MCF 10A (cell line): ENCODE measurements at regions of chrX and their contacts with region 1.

Region 1: GRCh38 chrX:109840585-109840984 is 107.5 kb upstream of the ACSL4 start:
- DNase-seq: peak; percentile 93
- H3K4me3 Mint-ChIP-seq: no peak overlapping the region
- H3K27ac Mint-ChIP-seq: no peak overlapping the region
- H3K4me1 Mint-ChIP-seq: no peaks in the 10 kb centered on the region
- H3K27me3 Mint-ChIP-seq: peaks cover 13% of the 10 kb centered on the region
- CTCF ChIP-seq: no peak

Region 2: DNA sequence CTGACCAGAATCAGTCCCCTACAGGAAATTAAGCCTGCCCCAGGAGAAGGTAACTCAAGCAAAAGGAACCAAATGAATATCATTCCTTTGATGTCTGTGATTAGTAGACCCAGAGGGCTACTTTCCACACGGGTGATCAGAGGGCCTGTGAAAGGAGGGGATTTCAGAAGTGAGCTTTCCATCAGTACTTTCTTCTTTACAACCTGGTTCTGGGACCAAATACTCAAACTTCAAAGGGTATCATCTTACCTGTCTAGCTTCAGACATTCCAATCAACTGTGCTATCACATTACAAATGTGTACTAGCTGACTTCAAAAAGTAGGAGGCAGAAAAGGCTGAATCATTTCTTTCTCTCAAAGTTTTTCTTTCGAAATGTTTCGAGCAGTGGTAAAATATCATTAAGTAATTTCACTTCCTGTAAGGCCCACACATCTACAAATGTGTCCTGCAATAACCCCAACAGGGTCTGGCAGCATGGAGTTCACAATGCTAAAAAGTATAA is 131.4 kb before region 1 on chrX:
- CTCF ChIA-PET with region 1: interaction called, 45 read pairs
- POLR2A ChIA-PET with region 1: interaction called, 3 read pairs
- intact Hi-C with region 1: loop called (anchors 5 kb)
- DNase-seq: peak; percentile 58
- H3K4me3 Mint-ChIP-seq: no peak overlapping the region
- H3K27ac Mint-ChIP-seq: peak overlapping the region; percentile 42
- H3K4me1 Mint-ChIP-seq: peaks cover 10% of the 10 kb centered on the region
- H3K27me3 Mint-ChIP-seq: peaks cover 14% of the 10 kb centered on the region
- CTCF ChIP-seq: no peak

Region 3: GRCh38 chrX:109714340-109714958 is 126.1 kb before region 1 on chrX:
- CTCF ChIA-PET with region 1: interaction called, 45 read pairs
- POLR2A ChIA-PET with region 1: interaction called, 3 read pairs
- intact Hi-C with region 1: loop called (anchors 5 kb)
- DNase-seq: peak; percentile 61
- H3K4me3 Mint-ChIP-seq: no peak overlapping the region
- H3K27ac Mint-ChIP-seq: no peak overlapping the region
- H3K4me1 Mint-ChIP-seq: peaks cover 10% of the 10 kb centered on the region
- H3K27me3 Mint-ChIP-seq: no peaks in the 10 kb centered on the region
- CTCF ChIP-seq: no peak

Region 4: DNA sequence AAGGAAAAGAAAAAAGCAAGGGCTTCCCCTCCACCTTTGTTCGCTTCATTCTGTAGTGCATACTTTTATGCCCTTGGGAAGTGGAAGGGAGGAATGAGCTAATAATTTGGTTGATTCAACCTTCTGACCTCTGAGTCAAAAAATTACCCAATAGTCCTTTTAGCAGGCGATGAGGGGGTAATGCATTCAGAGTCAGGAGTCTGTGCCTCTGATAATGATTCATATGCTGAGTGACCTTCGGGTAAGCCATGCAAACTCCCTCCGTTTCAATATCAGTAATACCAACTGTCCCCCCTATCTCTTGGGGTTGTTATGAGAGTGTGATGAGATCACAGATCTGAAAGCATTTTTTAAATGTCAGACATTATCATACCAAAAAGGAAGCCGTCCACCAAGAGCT is 65.9 kb before region 1 on chrX:
- CTCF ChIA-PET with region 1: no interaction called
- POLR2A ChIA-PET with region 1: interaction called, 3 read pairs
- intact Hi-C with region 1: loop called (anchors 10 kb)
- DNase-seq: peak; percentile 81
- H3K4me3 Mint-ChIP-seq: no peak overlapping the region
- H3K27ac Mint-ChIP-seq: no peak overlapping the region
- H3K4me1 Mint-ChIP-seq: peaks cover 8% of the 10 kb centered on the region
- H3K27me3 Mint-ChIP-seq: peaks cover 38% of the 10 kb centered on the region
- CTCF ChIP-seq: no peak

Region 5: GRCh38 chrX:109797311-109797975 is 43.1 kb before region 1 on chrX:
- CTCF ChIA-PET with region 1: interaction called, 4 read pairs
- POLR2A ChIA-PET with region 1: interaction called, 11 read pairs
- intact Hi-C with region 1: no loop called
- DNase-seq: peak; percentile 17
- H3K4me3 Mint-ChIP-seq: no peak overlapping the region
- H3K27ac Mint-ChIP-seq: peak overlapping the region; percentile 8
- H3K4me1 Mint-ChIP-seq: peaks cover 15% of the 10 kb centered on the region
- H3K27me3 Mint-ChIP-seq: peaks cover 34% of the 10 kb centered on the region
- CTCF ChIP-seq: no peak

Region 6: GRCh38 chrX:109826954-109827708 is 13.5 kb before region 1 on chrX:
- CTCF ChIA-PET with region 1: interaction called, 7 read pairs
- POLR2A ChIA-PET with region 1: interaction called, 10 read pairs
- intact Hi-C with region 1: no loop called
- DNase-seq: peak; percentile 52
- H3K4me3 Mint-ChIP-seq: no peak overlapping the region
- H3K27ac Mint-ChIP-seq: no peak overlapping the region
- H3K4me1 Mint-ChIP-seq: peaks cover 12% of the 10 kb centered on the region
- H3K27me3 Mint-ChIP-seq: peaks cover 60% of the 10 kb centered on the region
- CTCF ChIP-seq: no peak

Region 7: DNA sequence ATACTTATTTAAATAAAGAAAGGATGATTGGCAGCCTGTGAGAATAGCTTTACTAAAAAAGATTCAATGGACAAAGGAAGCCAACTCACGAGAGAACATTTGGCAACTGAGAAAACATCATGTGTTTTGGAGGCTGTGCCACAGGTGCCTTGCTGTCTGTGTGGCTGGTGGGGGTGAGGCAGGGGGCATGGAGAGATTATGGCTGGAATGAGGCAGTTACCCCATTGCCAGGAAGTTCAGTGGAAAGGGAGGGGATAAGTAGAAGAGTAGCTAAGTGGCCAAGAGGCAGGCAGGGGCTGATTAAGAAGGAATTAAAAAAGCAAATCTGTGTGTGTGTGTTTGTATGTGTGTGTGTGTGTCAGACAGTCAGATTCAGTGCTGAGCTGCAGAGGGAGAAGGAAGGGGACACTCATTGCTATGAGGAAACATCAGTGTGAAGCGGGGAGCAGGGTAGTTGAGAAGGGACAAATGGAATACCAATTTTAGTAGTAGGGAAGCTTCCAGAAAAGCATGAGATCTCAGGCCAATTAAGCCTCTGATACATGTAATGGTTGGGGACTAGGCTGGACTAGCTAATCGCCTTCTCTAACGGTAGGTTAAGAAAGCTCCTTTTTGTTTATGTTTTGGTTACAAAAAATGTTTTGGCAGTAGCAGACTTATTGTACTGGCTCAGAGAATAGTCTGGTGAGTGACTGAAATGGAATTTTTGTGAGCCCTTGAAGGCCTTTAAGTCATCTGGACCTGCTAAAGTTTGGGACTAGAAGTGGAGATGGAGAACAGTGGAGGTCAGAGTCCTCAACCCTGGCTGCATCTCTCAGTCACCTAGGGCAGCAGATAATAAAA is 180.8 kb after region 1 on chrX:
- CTCF ChIA-PET with region 1: no interaction called
- POLR2A ChIA-PET with region 1: no interaction called
- intact Hi-C with region 1: no loop called
- DNase-seq: peak; percentile 34
- H3K4me3 Mint-ChIP-seq: no peak overlapping the region
- H3K27ac Mint-ChIP-seq: no peak overlapping the region
- H3K4me1 Mint-ChIP-seq: peaks cover 9% of the 10 kb centered on the region
- H3K27me3 Mint-ChIP-seq: no peaks in the 10 kb centered on the region
- CTCF ChIP-seq: no peak

Region 8: GRCh38 chrX:110226931-110227330 is 386.3 kb after region 1 on chrX:
- CTCF ChIA-PET with region 1: no interaction called
- POLR2A ChIA-PET with region 1: no interaction called
- intact Hi-C with region 1: no loop called
- DNase-seq: no peak
- H3K4me3 Mint-ChIP-seq: no peak overlapping the region
- H3K27ac Mint-ChIP-seq: no peak overlapping the region
- H3K4me1 Mint-ChIP-seq: peaks cover 7% of the 10 kb centered on the region
- H3K27me3 Mint-ChIP-seq: peaks cover 62% of the 10 kb centered on the region
- CTCF ChIP-seq: no peak

Region 9: DNA sequence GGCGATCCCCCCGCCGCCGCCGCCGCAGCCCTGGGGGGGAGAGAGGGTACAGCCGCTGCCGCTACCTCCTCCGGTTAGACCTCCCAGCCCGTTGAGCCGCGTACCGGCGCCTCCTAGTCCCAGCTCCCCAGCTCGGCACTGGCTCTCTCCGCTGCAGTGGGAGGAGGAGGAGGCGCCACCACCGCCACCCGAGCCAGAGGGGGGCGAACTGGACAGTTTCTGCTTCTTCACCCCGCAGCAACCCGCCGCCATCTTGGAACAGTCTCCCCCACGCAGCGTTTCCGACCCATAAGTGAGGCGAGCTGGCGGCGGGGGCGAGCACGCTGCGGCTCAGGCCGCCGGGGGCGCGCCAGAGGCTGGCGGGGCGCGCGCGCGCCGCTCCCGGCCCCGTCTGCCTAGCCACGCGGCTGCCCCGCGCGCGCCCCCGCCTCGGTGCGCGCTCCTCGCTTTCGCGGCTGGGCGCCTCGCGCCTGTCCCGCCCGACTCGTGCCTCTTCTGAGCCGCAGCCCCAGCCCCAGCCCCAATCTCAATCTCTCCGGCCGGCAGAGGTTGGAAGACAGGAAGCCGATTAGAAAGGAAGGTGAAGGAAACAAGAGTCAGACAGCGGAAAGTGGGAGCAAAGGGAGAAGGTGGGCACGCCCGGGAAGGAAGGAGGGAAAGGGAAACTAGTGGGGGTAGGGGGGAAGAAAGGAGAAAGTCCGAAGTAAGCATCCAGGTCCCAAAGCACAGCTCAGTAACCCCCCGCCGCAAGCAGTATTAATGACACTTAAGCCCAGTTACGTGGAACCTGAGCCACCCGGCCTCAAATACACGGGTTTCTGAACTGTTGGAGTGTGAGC is 477.5 kb after region 1 on chrX and contains the start of gene AMMECR1:
- CTCF ChIA-PET with region 1: no interaction called
- POLR2A ChIA-PET with region 1: no interaction called
- intact Hi-C with region 1: no loop called
- DNase-seq: peak; percentile 71
- H3K4me3 Mint-ChIP-seq: peak within 1 kb of the TSS; percentile 89
- H3K27ac Mint-ChIP-seq: peak within 1 kb of the TSS; percentile 95
- H3K4me1 Mint-ChIP-seq: peaks cover 6% of the 10 kb centered on the region
- H3K27me3 Mint-ChIP-seq: peaks cover 32% of the 10 kb centered on the region
- CTCF ChIP-seq: no peak
- total RNA-seq, gene AMMECR1: 20.8 and 27.0 TPM in 2 replicates